ENCODE measurements at regions of chr9 and their contacts with region 1.

Region 1: DNA sequence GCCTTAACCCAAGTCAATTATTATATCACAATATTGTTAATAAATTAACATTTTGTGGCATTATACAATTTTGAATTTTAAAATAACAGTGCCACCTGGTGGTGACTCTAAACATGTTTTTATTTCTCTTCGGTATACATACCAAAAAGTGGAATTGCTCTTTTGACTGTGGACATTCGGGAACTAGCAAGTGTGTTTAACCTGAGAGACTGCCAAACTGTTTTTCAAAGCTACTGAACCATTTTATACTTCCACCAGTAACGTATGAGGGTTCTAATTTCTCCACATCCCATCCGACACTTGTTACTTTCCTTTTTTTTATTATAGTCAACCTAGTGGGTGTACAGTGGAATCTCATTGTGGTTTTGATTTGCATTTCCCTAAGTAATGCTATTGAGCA is 18.3 kb upstream of the HSDL2 start:
- DNase-seq: peak; percentile 37
- ATAC-seq: peak; percentile 57
- H3K4me3 ChIP-seq: no peak overlapping the region
- H3K27ac ChIP-seq: no peak overlapping the region
- H3K4me1 ChIP-seq: peaks cover 6% of the 10 kb centered on the region
- H3K27me3 ChIP-seq: no peaks in the 10 kb centered on the region
- CTCF ChIP-seq: peak; percentile 56
- EP300 ChIP-seq: no peak
- POLR2A ChIP-seq: no peak
- RAD21 ChIP-seq: 0 out of 2 replicates have a peak, but pooled peaks have one; percentile 36

Region 2: GRCh38 chr9:111759762-111760639 is 601.6 kb before region 1 on chr9:
- CTCF ChIA-PET with region 1: no interaction called
- POLR2A ChIA-PET with region 1: no interaction called
- in situ Hi-C with region 1: loop called (anchors 25 kb)
- intact Hi-C with region 1: no loop called
- DNase-seq: peak; percentile 50
- ATAC-seq: peak; percentile 72
- H3K4me3 ChIP-seq: no peak overlapping the region
- H3K27ac ChIP-seq: no peak overlapping the region
- H3K4me1 ChIP-seq: no peaks in the 10 kb centered on the region
- H3K27me3 ChIP-seq: no peaks in the 10 kb centered on the region
- CTCF ChIP-seq: peak; percentile 76
- EP300 ChIP-seq: no peak
- POLR2A ChIP-seq: no peak
- RAD21 ChIP-seq: peak; percentile 60; the same call in 1 of the 2 replicates

Region 3: GRCh38 chr9:111857609-111858211 is 503.9 kb before region 1 on chr9:
- CTCF ChIA-PET with region 1: no interaction called
- POLR2A ChIA-PET with region 1: no interaction called
- in situ Hi-C with region 1: no loop called
- intact Hi-C with region 1: no loop called
- DNase-seq: no peak
- ATAC-seq: no peak
- H3K4me3 ChIP-seq: no peak overlapping the region
- H3K27ac ChIP-seq: no peak overlapping the region
- H3K4me1 ChIP-seq: no peaks in the 10 kb centered on the region
- H3K27me3 ChIP-seq: no peaks in the 10 kb centered on the region
- CTCF ChIP-seq: no peak
- EP300 ChIP-seq: no peak
- POLR2A ChIP-seq: no peak
- RAD21 ChIP-seq: no peak

Region 4: DNA sequence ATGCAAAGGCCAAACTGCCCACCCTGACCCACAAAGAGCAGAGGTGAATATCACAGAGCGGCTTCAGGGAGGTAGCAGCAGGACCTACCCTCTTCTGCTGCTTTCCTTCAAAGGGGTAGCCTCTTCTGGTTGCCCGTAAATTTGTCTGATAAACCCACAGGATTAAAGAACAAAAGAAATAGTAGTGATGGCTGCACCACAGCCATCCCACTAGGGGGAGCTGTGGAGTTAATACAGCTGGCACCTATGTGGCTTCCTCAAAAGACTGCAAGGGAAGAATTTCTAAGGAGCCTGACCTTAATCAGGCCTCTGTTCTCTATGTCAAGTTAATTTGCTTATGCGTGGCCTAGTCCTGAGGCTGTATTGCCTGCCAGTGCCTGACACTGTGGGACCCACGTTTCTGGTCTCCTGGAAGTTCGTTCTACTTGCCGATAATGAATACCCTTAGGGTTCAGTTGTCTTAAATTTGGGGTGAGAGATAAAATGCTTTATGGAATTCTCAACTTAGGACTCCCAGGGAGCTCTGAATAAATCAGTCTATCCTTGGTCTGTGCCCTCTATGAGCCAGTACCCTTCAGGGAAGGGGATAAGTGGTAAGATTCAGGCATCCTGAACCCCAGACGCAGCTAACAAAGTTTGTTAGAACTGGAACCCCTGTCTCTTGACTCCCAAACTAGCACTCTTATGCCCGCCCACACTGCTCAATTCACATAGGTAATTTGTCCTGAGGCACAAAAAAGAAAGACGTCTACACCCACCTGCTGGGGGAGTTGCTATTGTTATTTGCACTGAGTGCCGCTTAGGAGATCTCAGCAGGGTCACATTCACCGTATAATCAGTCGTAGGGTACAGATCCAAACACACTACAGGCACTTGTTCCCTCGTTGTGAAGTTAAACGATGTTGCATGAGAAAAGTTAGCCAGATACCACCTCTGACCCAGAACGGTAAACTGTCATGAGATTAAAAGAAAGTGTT is 263.6 kb before region 1 on chr9:
- CTCF ChIA-PET with region 1: interaction called, 12 read pairs
- POLR2A ChIA-PET with region 1: no interaction called
- in situ Hi-C with region 1: no loop called
- intact Hi-C with region 1: loop called (anchors 1 kb)
- DNase-seq: peak; percentile 33
- ATAC-seq: peak; percentile 81
- H3K4me3 ChIP-seq: no peak overlapping the region
- H3K27ac ChIP-seq: no peak overlapping the region
- H3K4me1 ChIP-seq: no peaks in the 10 kb centered on the region
- H3K27me3 ChIP-seq: no peaks in the 10 kb centered on the region
- CTCF ChIP-seq: peak; percentile 76
- EP300 ChIP-seq: no peak
- POLR2A ChIP-seq: no peak
- RAD21 ChIP-seq: peak; percentile 68

Region 5: DNA sequence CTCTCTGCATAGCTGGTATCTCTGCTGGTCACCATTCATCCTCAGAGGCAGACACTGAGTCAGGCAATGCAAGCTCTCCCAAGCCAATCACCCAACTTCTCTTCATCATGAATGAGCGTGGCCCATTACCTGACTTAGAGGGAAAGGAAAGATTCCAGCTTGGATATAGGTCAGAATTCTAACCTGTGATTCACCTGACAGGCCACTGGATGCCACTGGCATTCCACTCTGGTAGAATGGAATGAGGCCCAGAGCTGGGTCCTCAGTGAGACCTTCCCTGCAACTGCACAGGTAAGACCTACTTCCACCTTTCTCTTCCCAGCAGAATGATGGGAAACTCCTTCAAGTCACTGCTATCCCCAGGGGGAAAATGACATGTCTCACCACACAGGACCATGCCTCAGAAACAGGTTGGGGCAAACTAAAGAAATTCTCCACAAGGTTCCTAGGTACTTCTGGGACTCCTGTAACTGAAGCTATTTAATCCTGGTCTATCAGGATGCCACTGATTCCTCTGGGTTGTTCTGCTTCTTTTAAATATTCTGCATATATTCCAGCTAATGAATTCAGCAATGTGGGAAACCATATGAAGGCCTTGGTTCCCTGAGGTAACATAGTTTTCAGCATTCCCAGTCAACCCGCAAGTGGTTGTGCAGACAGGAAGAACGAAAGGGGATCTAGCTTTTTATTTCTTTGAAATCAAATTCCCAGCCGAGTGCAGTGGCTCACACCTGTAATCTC is 248.5 kb before region 1 on chr9:
- CTCF ChIA-PET with region 1: interaction called, 12 read pairs
- POLR2A ChIA-PET with region 1: no interaction called
- in situ Hi-C with region 1: loop called (anchors 5 kb)
- intact Hi-C with region 1: loop called (anchors 1 kb)
- DNase-seq: peak; percentile 60
- ATAC-seq: peak; percentile 88
- H3K4me3 ChIP-seq: no peak overlapping the region
- H3K27ac ChIP-seq: no peak overlapping the region
- H3K4me1 ChIP-seq: peaks cover 48% of the 10 kb centered on the region
- H3K27me3 ChIP-seq: no peaks in the 10 kb centered on the region
- CTCF ChIP-seq: peak; percentile 90
- EP300 ChIP-seq: no peak
- POLR2A ChIP-seq: no peak
- RAD21 ChIP-seq: peak; percentile 89